ENCODE measurements at regions of chr12 and their contacts with region 1.

Region 1: GRCh38 chr12:121005346-121005815 is 10.9 kb downstream of the C12orf43 start:
- DNase-seq: no peak
- ATAC-seq: peak; percentile 87
- H3K4me3 ChIP-seq: no peak overlapping the region
- H3K27ac ChIP-seq: no peak overlapping the region
- H3K4me1 ChIP-seq: no peaks in the 10 kb centered on the region
- H3K27me3 ChIP-seq: no peaks in the 10 kb centered on the region
- CTCF ChIP-seq: peak; percentile 63 to 77 (median 73)
- EP300 ChIP-seq: no peak
- POLR2A ChIP-seq: no peak
- RAD21 ChIP-seq: peak; percentile 53

Region 2: DNA sequence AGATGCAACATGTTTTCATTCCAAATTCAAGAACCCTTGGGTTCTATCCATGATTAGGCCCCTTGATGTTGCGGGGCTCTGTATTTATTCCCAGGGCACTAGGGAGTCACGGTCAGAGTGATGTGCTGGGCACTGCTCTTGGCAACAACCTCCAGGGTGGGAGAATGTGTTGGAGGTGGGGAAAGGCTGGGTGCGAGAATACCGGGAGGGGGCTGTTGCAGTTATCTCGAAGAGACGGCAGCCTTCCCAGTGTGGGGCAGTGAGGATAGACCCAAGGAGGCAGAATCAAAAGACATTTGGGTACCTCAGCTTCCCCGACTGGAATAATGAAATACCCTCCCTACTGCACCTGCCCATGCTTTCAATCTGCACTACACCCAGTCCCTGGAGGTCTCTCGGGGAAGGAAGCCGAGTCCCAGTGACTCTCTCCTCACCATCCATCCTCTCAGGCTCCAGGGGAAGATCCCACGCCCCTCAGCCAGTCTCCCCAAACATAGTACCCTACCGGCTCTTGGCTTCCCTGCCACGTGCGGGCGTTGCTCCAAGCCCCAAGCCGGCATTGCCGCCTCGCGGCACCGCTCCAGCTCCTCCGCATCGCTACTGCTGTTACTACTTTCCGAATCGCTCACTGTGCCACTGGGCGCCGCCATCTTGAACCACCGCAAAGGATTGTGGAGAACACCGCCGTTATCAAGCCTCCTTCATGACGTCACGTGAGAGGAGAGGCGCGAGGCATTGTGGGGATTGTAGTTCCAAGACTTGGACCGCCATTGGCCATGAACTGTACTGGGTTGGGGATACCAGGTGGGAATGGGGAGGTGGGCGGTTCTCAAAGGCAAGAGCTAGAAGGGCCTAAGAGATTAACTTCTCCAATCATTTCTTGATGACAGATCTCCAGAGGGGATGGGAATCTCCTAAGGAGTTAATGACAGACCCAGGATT is 10.7 kb after region 1 on chr12 and contains the start of gene C12orf43:
- CTCF ChIA-PET with region 1: no interaction called
- POLR2A ChIA-PET with region 1: no interaction called
- RAD21 ChIA-PET with region 1: no interaction called
- SMC1A ChIA-PET with region 1: no interaction called
- in situ Hi-C with region 1: no loop called
- intact Hi-C with region 1: no loop called
- DNase-seq: peak; percentile 77
- ATAC-seq: peak; percentile 98
- H3K4me3 ChIP-seq: peak within 1 kb of the TSS; percentile 84
- H3K27ac ChIP-seq: peak within 1 kb of the TSS; percentile 75
- H3K4me1 ChIP-seq: 0 out of 2 replicates have a peak, but pooled peaks cover 4% of the 10 kb centered on the region
- H3K27me3 ChIP-seq: no peaks in the 10 kb centered on the region
- CTCF ChIP-seq: no peak
- EP300 ChIP-seq: no peak
- POLR2A ChIP-seq: peak; percentile 89
- RAD21 ChIP-seq: no peak
- polyA plus RNA-seq, gene C12orf43: 7.5 to 10.2 TPM

Region 3: DNA sequence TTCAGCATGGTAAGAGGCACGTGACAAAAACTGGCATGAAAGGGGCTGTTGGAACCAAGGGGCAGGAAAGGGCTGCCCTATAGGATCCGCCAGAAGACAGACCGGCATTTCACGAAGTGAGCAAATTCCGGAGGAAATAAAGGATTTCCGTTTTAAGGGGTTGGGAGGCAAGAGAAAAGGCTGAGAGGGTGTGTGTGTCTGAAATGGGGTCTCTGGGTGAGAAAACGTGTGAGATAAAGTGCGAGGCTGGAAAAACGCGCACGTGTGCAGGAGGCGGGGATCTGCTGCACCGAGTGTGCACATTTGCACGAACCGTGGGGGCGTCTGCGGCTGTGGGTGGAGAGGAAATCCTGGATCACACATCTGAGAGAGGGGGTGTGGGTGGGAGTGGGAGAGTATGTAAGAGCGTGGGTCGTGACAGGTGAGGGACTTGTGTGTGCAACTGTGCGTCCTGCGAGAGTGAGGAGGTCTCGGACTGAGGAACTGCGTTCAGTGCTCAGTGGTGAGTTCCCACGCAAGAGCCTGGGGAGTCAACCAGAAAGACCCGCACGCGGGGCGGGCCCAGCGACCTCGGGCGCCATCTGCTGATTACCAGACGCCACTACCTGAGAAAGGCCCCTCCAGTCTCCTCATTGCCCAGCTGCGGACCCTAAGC is 90.3 kb after region 1 on chr12:
- CTCF ChIA-PET with region 1: interaction called, 11 read pairs
- POLR2A ChIA-PET with region 1: no interaction called
- RAD21 ChIA-PET with region 1: interaction called, 21 read pairs
- SMC1A ChIA-PET with region 1: interaction called, 4 read pairs
- in situ Hi-C with region 1: no loop called
- intact Hi-C with region 1: no loop called
- DNase-seq: peak; percentile 21
- ATAC-seq: peak; percentile 97
- H3K4me3 ChIP-seq: no peak overlapping the region; the same call in 1 of the 2 replicates
- H3K27ac ChIP-seq: no peak overlapping the region
- H3K4me1 ChIP-seq: peaks cover 9% of the 10 kb centered on the region
- H3K27me3 ChIP-seq: no peaks in the 10 kb centered on the region
- CTCF ChIP-seq: peak; percentile 90 to 95 (median 92)
- EP300 ChIP-seq: no peak; a peak in 1 of 4 replicates
- POLR2A ChIP-seq: no peak
- RAD21 ChIP-seq: peak; percentile 71